ENCODE measurements at regions of chr19 and their contacts with region 1.

Region 1: GRCh38 chr19:16382775-16383543 is 58.3 kb downstream of the KLF2 start:
- DNase-seq: peak; percentile 81
- CTCF ChIP-seq: peak; percentile 77

Region 2: GRCh38 chr19:16041299-16041990 is 341.5 kb before region 1 on chr19:
- CTCF ChIA-PET with region 1: interaction called, 12 read pairs
- POLR2A ChIA-PET with region 1: no interaction called
- DNase-seq: peak; percentile 86
- CTCF ChIP-seq: peak; percentile 93

Region 3: GRCh38 chr19:16247353-16248182 is 135.4 kb before region 1 on chr19:
- CTCF ChIA-PET with region 1: interaction called, 73 read pairs
- POLR2A ChIA-PET with region 1: no interaction called
- DNase-seq: peak; percentile 90
- CTCF ChIP-seq: peak; percentile 86

Region 4: GRCh38 chr19:16371540-16371986 is 11.4 kb before region 1 on chr19:
- CTCF ChIA-PET with region 1: interaction called, 15 read pairs
- POLR2A ChIA-PET with region 1: no interaction called
- DNase-seq: peak; percentile 72
- CTCF ChIP-seq: no peak

Region 5: GRCh38 chr19:16394681-16395375 is 11.9 kb after region 1 on chr19:
- CTCF ChIA-PET with region 1: interaction called, 11 read pairs
- POLR2A ChIA-PET with region 1: interaction called, 3 read pairs
- DNase-seq: no peak
- CTCF ChIP-seq: no peak

Region 6: GRCh38 chr19:16400911-16401591 is 18.1 kb after region 1 on chr19:
- CTCF ChIA-PET with region 1: interaction called, 11 read pairs
- POLR2A ChIA-PET with region 1: interaction called, 3 read pairs
- DNase-seq: no peak
- CTCF ChIP-seq: no peak

Region 7: DNA sequence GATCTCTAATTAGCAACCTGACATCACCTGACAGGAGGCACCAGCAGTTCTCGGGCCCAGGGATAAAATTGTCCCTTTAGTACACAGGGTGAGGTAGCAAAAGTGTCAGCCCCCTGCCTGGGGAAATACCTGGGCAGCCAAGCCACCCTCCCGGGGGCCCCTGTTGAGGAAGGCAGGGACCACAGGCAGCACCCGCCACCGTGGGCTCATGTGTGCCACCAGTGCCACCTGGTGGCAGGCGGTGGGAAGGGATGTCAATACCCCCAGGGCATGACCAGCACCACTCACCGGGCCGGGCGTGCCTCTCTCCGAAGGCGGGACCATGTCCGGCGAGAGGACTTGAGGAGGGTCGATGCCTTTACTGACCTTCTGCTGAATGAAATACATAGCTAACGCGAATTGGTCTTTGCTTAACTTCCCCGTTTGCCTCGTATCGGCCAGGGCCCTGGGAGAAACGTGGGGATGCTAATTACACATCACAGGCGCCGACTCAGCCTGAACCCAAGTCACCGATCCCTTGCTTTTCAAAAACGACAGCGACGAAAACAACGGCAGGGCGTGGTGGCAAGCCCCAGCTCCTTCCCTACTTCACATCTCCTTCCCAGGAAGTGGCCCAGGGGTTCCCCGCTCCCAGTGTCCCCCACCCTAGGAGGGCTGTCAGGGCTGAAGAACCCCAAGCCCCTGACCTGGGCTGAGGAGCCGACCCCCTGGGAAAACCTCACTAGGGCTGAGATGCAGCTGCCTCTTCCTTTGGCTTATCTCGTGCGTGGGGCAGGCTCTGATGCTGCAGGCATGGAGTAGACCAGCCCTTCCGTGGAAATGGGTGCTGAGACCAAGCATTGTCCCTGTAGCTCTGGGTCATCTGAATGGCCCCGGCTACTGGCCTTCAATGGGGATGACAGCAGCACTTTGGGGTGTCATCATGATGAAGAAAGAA is 35.0 kb after region 1 on chr19:
- CTCF ChIA-PET with region 1: interaction called, 11 read pairs
- POLR2A ChIA-PET with region 1: no interaction called
- DNase-seq: peak; percentile 89
- CTCF ChIP-seq: peak; percentile 88

Measured in GM10248 (cell line).